WTC11 (cell line): ENCODE measurements at regions of chr11 and their contacts with region 1.

Region 1: DNA sequence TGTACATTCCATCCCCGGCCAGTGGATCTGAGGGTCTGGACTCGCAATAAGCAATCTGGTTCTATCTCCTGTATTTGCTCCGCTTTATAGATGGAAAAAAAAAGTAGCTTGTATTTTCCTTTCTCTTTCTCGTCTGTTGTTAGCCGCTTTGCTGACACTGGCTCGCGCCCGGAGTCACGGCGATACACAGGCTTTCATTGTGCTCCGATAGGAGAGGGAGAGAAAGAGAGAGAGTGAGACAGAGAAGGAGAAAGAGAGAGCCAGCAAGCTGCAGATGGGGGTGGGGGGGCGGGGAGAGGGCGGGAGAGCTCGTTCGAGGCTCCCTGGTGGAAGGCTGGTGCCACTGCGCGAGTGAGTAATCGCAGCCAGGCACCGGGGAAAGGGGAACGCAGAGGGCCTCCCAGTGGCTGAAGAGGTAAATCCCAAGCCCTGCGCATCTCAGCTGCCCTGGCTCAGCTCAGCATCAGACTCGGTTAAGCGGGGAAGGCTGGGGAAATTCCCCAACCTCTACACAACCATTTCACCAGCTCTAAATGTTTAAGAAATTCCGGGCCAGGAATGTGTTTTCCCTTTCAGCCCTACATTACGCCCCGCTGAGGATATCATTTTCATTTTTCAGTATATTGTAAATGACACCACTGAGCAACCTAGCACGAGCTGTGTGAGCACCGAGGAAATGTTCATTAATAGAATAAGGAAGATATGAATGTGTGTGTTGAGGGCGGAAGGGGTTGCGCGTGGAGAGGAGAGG is at the start of gene MAML2:
- DNase-seq: peak; percentile 94
- ATAC-seq: peak; percentile 97
- H3K4me3 Mint-ChIP-seq: peak within 1 kb of the TSS; percentile 94
- H3K27ac Mint-ChIP-seq: peak within 1 kb of the TSS; percentile 80; the same call in 1 of the 2 replicates
- H3K4me1 Mint-ChIP-seq: peaks cover 45% of the 10 kb centered on the region
- H3K27me3 Mint-ChIP-seq: no peaks in the 10 kb centered on the region
- CTCF ChIP-seq: peak; percentile 50; the same call in 1 of the 2 replicates
- total RNA-seq, gene MAML2: 5.1 to 8.1 TPM (median 5.2 TPM) in 3 replicates

Region 2: GRCh38 chr11:95849087-95849825 is 493.9 kb before region 1 on chr11:
- CTCF ChIA-PET with region 1: interaction called, 25 read pairs
- POLR2A ChIA-PET with region 1: no interaction called
- DNase-seq: peak; percentile 30
- ATAC-seq: peak; percentile 96
- H3K4me3 Mint-ChIP-seq: no peak overlapping the region
- H3K27ac Mint-ChIP-seq: no peak overlapping the region
- H3K4me1 Mint-ChIP-seq: no peaks in the 10 kb centered on the region
- H3K27me3 Mint-ChIP-seq: no peaks in the 10 kb centered on the region
- CTCF ChIP-seq: no peak

Region 3: GRCh38 chr11:95977534-95978174 is 365.5 kb before region 1 on chr11:
- CTCF ChIA-PET with region 1: no interaction called
- POLR2A ChIA-PET with region 1: no interaction called
- DNase-seq: no peak
- ATAC-seq: no peak
- H3K4me3 Mint-ChIP-seq: no peak overlapping the region
- H3K27ac Mint-ChIP-seq: no peak overlapping the region
- H3K4me1 Mint-ChIP-seq: no peaks in the 10 kb centered on the region
- H3K27me3 Mint-ChIP-seq: no peaks in the 10 kb centered on the region
- CTCF ChIP-seq: no peak

Region 4: GRCh38 chr11:96073536-96073935 is 269.6 kb before region 1 on chr11:
- CTCF ChIA-PET with region 1: interaction called, 15 read pairs
- POLR2A ChIA-PET with region 1: no interaction called
- DNase-seq: no peak
- ATAC-seq: no peak
- H3K4me3 Mint-ChIP-seq: no peak overlapping the region
- H3K27ac Mint-ChIP-seq: no peak overlapping the region
- H3K4me1 Mint-ChIP-seq: peaks cover 21% of the 10 kb centered on the region
- H3K27me3 Mint-ChIP-seq: no peaks in the 10 kb centered on the region
- CTCF ChIP-seq: no peak

Region 5: GRCh38 chr11:96197801-96198701 is 145.1 kb before region 1 on chr11:
- CTCF ChIA-PET with region 1: interaction called, 14 read pairs
- POLR2A ChIA-PET with region 1: no interaction called
- DNase-seq: no peak
- ATAC-seq: no peak
- H3K4me3 Mint-ChIP-seq: no peak overlapping the region
- H3K27ac Mint-ChIP-seq: peak overlapping the region; percentile 80; the same call in 1 of the 2 replicates
- H3K4me1 Mint-ChIP-seq: peaks cover 77% of the 10 kb centered on the region
- H3K27me3 Mint-ChIP-seq: no peaks in the 10 kb centered on the region
- CTCF ChIP-seq: no peak

Region 6: DNA sequence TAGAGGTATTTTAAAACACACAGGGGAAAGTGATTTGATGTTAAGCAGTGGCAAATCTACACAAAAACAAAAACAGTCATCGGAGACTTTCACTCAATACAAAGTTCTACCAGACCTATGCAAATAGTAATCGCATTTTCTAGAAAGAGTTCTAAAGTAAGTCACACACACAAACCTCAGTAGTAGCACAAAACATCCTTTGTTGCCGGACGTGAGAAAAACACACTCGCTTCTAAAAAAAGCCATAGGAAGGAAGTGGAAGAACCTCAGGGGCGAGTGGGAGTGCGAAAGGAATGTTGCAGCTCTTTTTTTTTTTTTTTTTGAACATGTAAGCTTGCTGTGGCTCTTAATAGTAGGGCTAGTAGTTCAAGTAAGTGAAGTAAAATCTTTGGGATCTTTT is 89.0 kb before region 1 on chr11:
- CTCF ChIA-PET with region 1: interaction called, 10 read pairs
- POLR2A ChIA-PET with region 1: no interaction called
- DNase-seq: no peak
- ATAC-seq: no peak
- H3K4me3 Mint-ChIP-seq: no peak overlapping the region
- H3K27ac Mint-ChIP-seq: peak overlapping the region; percentile 91
- H3K4me1 Mint-ChIP-seq: peaks cover 50% of the 10 kb centered on the region
- H3K27me3 Mint-ChIP-seq: no peaks in the 10 kb centered on the region
- CTCF ChIP-seq: no peak

Region 7: GRCh38 chr11:96306933-96307775 is 36.0 kb before region 1 on chr11:
- CTCF ChIA-PET with region 1: interaction called, 33 read pairs
- POLR2A ChIA-PET with region 1: no interaction called
- DNase-seq: no peak
- ATAC-seq: peak; percentile 72
- H3K4me3 Mint-ChIP-seq: peak overlapping the region; percentile 44
- H3K27ac Mint-ChIP-seq: peak overlapping the region; percentile 38
- H3K4me1 Mint-ChIP-seq: peaks cover 36% of the 10 kb centered on the region
- H3K27me3 Mint-ChIP-seq: no peaks in the 10 kb centered on the region
- CTCF ChIP-seq: no peak

Region 8: DNA sequence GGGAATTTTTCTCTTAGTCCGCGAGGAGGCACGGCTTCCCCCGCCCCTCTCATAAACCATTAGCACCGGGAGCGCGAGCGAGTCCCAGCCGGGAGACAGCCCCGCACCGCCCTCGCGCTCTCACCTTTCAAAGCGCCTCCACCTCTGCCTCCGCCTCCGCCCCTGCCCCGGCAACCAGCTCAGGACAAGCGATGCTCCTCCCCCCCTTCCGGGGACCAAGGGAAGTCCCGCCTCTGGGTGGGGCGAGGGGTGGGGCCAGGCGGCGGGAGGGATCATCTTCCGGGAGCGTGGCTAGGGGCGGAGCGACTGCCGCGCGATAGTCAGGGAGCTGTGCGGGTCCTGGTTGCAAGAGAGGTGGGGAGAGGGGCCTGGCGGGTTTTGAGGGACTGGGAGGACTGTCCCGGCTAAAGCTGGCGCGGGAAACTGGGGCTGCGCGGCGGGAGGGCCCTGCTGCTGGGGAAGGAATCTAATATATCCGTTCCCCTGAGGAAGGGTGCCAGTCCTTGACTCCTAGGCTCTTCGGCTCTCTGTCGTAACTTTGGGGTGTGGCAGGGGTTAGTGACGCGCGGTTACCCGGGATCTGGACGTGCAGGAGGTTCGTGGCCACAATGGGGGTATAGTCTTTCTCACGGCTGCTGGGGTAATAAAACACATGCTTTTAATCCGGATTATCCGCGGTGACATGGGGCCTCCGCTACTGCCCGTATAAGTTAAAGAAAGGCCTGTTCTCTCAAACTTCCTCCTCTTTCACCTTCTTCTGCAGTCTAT is 46.8 kb after region 1 on chr11 and contains the starts of genes CCDC82 and JRKL:
- CTCF ChIA-PET with region 1: interaction called, 38 read pairs
- POLR2A ChIA-PET with region 1: interaction called, 13 read pairs
- DNase-seq: peak; percentile 99
- ATAC-seq: peak; percentile 96
- H3K4me3 Mint-ChIP-seq: peak within 1 kb of the TSS; percentile 89
- H3K27ac Mint-ChIP-seq: peak within 1 kb of the TSS; percentile 91
- H3K4me1 Mint-ChIP-seq: peaks cover 20% of the 10 kb centered on the region
- H3K27me3 Mint-ChIP-seq: peaks cover 8% of the 10 kb centered on the region
- CTCF ChIP-seq: no peak
- total RNA-seq, gene CCDC82: 15.0 to 16.3 TPM (median 15.3 TPM) in 3 replicates
- total RNA-seq, gene JRKL: 5.0 to 6.1 TPM (median 5.7 TPM) in 3 replicates

Region 9: GRCh38 chr11:96472085-96472484 is 128.9 kb after region 1 on chr11:
- CTCF ChIA-PET with region 1: no interaction called
- POLR2A ChIA-PET with region 1: no interaction called
- DNase-seq: no peak
- ATAC-seq: peak; percentile 90
- H3K4me3 Mint-ChIP-seq: no peak overlapping the region
- H3K27ac Mint-ChIP-seq: no peak overlapping the region
- H3K4me1 Mint-ChIP-seq: no peaks in the 10 kb centered on the region
- H3K27me3 Mint-ChIP-seq: peaks cover 2% of the 10 kb centered on the region; the same call in 1 of the 2 replicates
- CTCF ChIP-seq: no peak